H1 (cell line): ENCODE measurements at regions of chr2 and their contacts with region 1.

Region 1: DNA sequence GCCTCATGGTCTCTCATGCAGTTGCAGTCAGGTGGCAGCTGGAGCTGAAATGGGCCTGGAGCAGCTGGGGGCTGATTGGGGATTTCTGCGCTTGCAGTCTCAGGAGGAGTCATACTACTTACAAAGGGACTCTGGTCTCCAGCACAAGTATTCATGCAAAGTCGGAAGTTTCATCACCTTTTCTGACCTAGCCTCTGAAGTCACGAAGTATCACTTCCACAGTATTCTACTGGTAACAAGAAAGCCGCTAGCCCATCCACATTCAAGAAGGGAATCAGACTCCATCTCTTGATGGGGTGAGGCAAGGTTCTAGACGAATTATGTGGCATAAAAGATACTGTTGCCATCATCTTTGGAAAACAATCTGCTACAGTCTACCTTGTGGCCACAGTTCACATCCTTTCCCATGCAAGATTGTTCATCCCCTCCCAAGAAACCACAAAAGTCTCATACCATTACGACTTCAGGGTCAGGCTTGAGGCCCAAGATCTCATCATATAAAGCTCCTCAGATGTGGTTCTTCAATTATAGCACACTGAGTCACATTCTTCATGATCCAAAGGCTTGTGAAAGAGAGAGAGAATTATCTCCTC is 95.3 kb downstream of the SMC6 start:
- DNase-seq: no peak
- H3K4me3 ChIP-seq: no peak overlapping the region
- H3K27ac ChIP-seq: no peak overlapping the region
- H3K4me1 ChIP-seq: no peaks in the 10 kb centered on the region
- H3K27me3 ChIP-seq: no peaks in the 10 kb centered on the region
- CTCF ChIP-seq: no peak
- EP300 ChIP-seq: no peak
- POLR2A ChIP-seq: peak in 1 of 2 experiments; percentile 38; a peak in 1 of 3 replicates
- RAD21 ChIP-seq: no peak

Region 2: DNA sequence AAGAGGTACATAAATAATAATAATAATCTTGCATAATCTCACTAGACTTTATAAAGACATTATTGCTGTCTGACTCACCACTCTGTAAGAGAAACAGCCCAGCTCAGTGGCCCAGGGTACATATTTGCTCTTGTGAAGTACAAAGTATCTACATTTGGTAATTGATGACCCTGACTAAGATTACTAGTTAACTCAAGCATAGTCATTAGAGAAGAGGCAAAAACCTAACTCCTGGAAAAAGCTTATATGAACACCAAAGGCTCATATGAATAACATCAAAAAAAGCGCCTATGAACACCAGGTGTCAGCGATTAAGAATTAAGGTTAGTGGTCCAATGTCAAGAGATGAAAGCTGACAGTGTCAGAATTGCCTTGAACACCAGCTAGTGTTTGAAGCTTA is 178.5 kb before region 1 on chr2:
- CTCF ChIA-PET with region 1: no interaction called
- POLR2A ChIA-PET with region 1: no interaction called
- DNase-seq: no peak
- H3K4me3 ChIP-seq: no peak overlapping the region
- H3K27ac ChIP-seq: no peak overlapping the region
- H3K4me1 ChIP-seq: no peaks in the 10 kb centered on the region; a peak in 2 of 7 replicates
- H3K27me3 ChIP-seq: no peaks in the 10 kb centered on the region
- CTCF ChIP-seq: no peak
- EP300 ChIP-seq: no peak
- POLR2A ChIP-seq: no peak
- RAD21 ChIP-seq: no peak

Region 3: DNA sequence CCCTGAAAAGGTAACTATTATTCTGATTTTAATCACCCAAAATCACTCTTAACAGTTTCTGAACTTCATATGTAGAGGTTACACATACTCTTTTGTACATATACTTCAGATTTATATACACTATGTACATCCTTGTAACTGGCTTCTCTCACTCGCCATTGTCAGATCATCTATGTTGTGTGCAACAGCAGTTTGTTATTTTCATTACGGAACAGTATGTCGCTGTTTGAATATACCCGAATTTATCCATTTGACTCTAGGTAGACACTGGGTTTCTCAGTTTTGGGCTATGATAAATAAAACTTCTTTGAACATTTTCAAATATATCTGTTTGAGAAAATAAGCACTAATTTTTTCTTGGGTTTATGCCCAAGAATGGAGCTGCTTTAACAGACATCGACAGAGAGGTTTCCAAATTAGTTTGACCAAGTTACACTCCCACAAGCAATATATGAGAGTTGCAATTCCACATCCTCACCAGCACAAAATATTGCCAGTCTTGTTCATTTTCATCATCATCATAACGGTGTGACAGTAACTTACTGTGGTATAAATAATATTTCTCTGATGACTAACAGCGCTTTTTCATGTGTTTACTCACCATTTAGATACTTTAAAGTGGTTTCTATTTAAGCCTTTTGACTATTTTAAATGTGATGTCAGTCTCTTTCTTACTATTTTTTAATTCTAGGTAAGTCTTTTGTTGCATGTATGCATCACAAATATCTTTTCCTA is 14.4 kb after region 1 on chr2:
- CTCF ChIA-PET with region 1: interaction called, 13 read pairs
- POLR2A ChIA-PET with region 1: interaction called, 5 read pairs
- DNase-seq: no peak
- H3K4me3 ChIP-seq: no peak overlapping the region
- H3K27ac ChIP-seq: no peak overlapping the region
- H3K4me1 ChIP-seq: no peaks in the 10 kb centered on the region
- H3K27me3 ChIP-seq: no peaks in the 10 kb centered on the region
- CTCF ChIP-seq: no peak
- EP300 ChIP-seq: no peak
- POLR2A ChIP-seq: no peak
- RAD21 ChIP-seq: no peak